Calu3 (cell line): ENCODE measurements at regions of chr3 and their contacts with region 1.

Region 1: GRCh38 chr3:27643355-27643754 is 78.8 kb downstream of the EOMES start:
- DNase-seq: peak; percentile 38
- H3K4me3 Mint-ChIP-seq: peak overlapping the region; percentile 36
- H3K27ac Mint-ChIP-seq: peak overlapping the region; percentile 73
- H3K4me1 Mint-ChIP-seq: peaks cover 38% of the 10 kb centered on the region
- H3K27me3 Mint-ChIP-seq: no peaks in the 10 kb centered on the region
- CTCF ChIP-seq: no peak

Region 2: DNA sequence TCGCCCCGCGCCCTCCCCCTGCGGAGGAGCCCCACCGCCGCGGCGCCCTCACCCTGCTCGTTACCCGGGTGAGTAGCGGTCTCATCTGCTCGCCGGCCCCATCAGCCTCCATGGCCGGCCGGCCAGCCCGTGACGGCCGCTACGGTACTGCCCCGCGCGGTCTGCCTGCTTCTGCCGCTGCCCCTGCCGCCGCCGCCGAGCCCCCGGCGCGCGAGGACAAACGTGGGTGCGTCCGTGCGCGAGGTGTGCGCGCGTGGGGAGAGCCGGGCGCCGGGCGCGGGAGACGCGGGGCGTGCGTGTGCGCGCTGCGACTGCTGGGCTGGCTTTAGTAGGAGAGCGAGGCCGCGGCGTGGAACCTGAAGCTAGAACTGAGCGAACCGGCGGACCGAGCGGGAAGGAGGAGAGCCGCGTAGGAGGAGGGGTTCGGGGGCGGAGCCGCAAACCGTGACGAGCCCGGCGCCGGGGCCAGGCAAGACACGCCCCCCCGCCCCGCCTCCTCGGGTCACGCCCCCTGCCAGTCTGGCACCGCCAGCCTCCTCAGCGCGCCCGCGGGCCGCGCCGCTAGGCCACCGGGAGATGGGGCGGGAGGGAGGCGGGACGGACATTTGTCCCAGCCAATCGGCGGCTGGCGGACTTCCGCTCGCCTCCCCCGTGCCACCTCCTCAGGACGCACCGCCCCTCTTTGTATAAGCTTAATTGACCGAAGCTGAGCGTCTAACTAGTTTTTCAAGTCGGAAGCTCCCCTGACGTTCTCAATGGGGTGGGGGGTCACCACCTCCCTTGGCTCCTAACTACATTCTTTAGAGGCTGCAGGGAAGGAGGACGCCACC is 159.1 kb before region 1 on chr3 and contains the start of gene SLC4A7:
- CTCF ChIA-PET with region 1: interaction called, 5 read pairs
- intact Hi-C with region 1: loop called (anchors 5 kb)
- DNase-seq: peak; percentile 99
- H3K4me3 Mint-ChIP-seq: peak within 1 kb of the TSS; percentile 97
- H3K27ac Mint-ChIP-seq: peak within 1 kb of the TSS; percentile 88
- H3K4me1 Mint-ChIP-seq: peaks cover 12% of the 10 kb centered on the region
- H3K27me3 Mint-ChIP-seq: no peaks in the 10 kb centered on the region
- CTCF ChIP-seq: no peak
- total RNA-seq, gene SLC4A7: 39.0 and 61.6 TPM in 2 replicates

Region 3: GRCh38 chr3:27607370-27607769 is 36.0 kb before region 1 on chr3:
- CTCF ChIA-PET with region 1: no interaction called
- intact Hi-C with region 1: loop called (anchors 5 kb)
- DNase-seq: peak; percentile 58
- H3K4me3 Mint-ChIP-seq: no peak overlapping the region
- H3K27ac Mint-ChIP-seq: peak overlapping the region; percentile 78
- H3K4me1 Mint-ChIP-seq: peaks cover 24% of the 10 kb centered on the region
- H3K27me3 Mint-ChIP-seq: no peaks in the 10 kb centered on the region
- CTCF ChIP-seq: no peak

Region 4: GRCh38 chr3:27632431-27633223 is 10.7 kb before region 1 on chr3:
- CTCF ChIA-PET with region 1: interaction called, 11 read pairs
- intact Hi-C with region 1: no loop called
- DNase-seq: peak; percentile 54
- H3K4me3 Mint-ChIP-seq: peak overlapping the region; percentile 78
- H3K27ac Mint-ChIP-seq: peak overlapping the region; percentile 71
- H3K4me1 Mint-ChIP-seq: peaks cover 10% of the 10 kb centered on the region
- H3K27me3 Mint-ChIP-seq: no peaks in the 10 kb centered on the region
- CTCF ChIP-seq: no peak

Region 5: GRCh38 chr3:27688053-27688452 is 44.7 kb after region 1 on chr3:
- CTCF ChIA-PET with region 1: no interaction called
- intact Hi-C with region 1: no loop called
- DNase-seq: no peak
- H3K4me3 Mint-ChIP-seq: no peak overlapping the region
- H3K27ac Mint-ChIP-seq: no peak overlapping the region
- H3K4me1 Mint-ChIP-seq: no peaks in the 10 kb centered on the region
- H3K27me3 Mint-ChIP-seq: no peaks in the 10 kb centered on the region
- CTCF ChIP-seq: no peak